ENCODE measurements at regions of chr3 and their contacts with region 1.

Region 1: DNA sequence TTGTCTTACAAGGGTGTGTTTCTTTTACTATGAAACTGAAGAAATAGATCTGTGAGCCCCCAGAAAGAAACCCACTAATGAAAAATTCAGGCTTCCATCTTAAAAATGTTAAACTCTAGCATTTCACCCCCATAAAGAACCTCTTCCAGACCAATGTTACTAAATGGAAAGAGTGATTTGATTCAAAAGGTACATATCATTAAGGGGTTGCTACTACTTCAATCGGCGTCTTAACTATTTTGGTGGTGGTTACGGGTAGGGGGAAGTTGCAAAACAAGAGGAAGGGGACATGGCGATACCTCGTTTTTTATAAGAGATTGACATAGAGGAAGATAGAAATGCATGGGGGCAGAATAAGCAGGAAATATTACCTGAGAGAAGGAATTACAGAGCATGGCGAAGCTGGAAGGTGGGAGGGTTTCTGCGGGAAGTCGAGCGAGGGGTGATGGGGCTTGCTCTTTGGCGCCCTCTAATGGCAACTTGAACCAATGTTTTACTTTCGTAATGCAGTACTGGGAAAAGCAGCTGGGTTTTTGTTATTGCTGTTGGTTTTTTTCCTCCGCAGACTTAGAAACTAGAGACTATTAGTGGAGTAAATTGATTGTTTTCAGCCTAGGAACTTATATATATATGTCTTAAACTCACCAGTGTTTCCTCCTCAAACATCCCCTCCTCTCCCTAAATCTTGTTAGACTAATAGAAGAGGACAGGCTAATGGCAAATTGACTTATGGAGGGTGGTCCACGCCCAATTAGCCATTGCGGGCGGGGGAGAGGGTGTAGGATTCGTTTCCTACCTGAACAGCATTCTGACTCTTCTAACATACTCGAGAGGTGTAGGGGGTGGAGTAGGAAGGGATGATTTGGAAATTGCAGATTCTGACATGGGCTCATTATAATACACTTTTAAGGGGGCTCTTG is 11.3 kb upstream of the SOX2 start:
- DNase-seq: peak; percentile 60
- ATAC-seq: peak; percentile 50
- H3K4me3 Mint-ChIP-seq: no peak overlapping the region
- H3K27ac Mint-ChIP-seq: no peak overlapping the region
- H3K4me1 Mint-ChIP-seq: peaks cover 23% of the 10 kb centered on the region
- H3K27me3 Mint-ChIP-seq: peaks cover 86% of the 10 kb centered on the region
- CTCF ChIP-seq: peak; percentile 75

Region 2: GRCh38 chr3:181210275-181210674 is 490.2 kb before region 1 on chr3:
- CTCF ChIA-PET with region 1: interaction called, 3 read pairs
- POLR2A ChIA-PET with region 1: no interaction called
- intact Hi-C with region 1: loop called (anchors 5 kb)
- DNase-seq: no peak
- ATAC-seq: no peak
- H3K4me3 Mint-ChIP-seq: no peak overlapping the region
- H3K27ac Mint-ChIP-seq: no peak overlapping the region
- H3K4me1 Mint-ChIP-seq: no peaks in the 10 kb centered on the region
- H3K27me3 Mint-ChIP-seq: peaks cover 6% of the 10 kb centered on the region
- CTCF ChIP-seq: peak; percentile 31

Region 3: GRCh38 chr3:181689546-181689945 is 10.9 kb before region 1 on chr3:
- CTCF ChIA-PET with region 1: interaction called, 10 read pairs
- POLR2A ChIA-PET with region 1: no interaction called
- intact Hi-C with region 1: no loop called
- DNase-seq: no peak
- ATAC-seq: no peak
- H3K4me3 Mint-ChIP-seq: no peak overlapping the region
- H3K27ac Mint-ChIP-seq: no peak overlapping the region
- H3K4me1 Mint-ChIP-seq: no peaks in the 10 kb centered on the region
- H3K27me3 Mint-ChIP-seq: peaks cover 11% of the 10 kb centered on the region
- CTCF ChIP-seq: no peak

Region 4: DNA sequence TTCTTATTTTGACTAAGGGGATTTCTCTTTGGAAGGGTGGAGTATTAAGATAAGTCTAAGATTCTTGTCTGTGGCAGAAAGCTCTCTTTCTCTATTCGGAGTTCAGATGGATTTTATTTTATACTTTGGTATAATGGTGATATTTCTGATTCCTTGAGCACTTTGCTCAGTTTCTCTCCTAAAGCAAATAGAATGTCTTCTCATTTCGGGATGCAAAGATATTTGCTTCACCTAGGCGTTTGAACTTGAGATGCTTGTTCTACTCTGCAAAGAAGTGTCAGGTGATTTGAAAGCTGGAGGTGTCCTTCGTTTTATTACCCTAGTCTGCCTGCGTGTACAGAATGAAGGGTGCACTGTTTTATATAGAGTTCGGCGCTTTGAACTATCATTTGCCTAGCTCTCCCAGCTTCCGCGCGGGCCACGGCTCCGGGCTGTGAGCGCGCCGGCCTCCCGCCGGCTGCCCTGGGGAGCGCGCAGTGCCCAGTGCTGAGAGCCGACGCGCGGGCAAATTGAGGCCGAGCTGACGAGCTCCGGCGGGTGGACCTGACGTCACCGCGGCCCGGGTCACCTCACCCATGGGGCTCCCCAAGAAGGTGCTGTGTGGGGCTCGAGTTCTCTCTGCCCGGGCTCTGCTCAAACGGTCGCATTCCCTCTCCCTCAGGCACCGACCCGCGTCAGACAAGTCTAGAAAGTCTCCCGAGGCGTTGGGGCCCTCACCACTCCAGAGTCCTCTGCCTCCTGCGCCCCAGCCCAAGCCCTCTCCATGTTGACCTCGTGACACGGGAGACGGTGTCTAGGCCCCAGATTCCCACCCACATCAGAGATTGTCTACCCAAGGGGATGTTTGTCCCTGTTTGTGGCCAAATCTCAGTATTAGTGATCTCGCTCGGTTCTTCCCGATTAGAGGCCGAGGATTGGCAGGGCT is 18.8 kb after region 1 on chr3:
- CTCF ChIA-PET with region 1: interaction called, 13 read pairs
- POLR2A ChIA-PET with region 1: no interaction called
- intact Hi-C with region 1: no loop called
- DNase-seq: no peak
- ATAC-seq: no peak
- H3K4me3 Mint-ChIP-seq: no peak overlapping the region
- H3K27ac Mint-ChIP-seq: no peak overlapping the region
- H3K4me1 Mint-ChIP-seq: peaks cover 3% of the 10 kb centered on the region
- H3K27me3 Mint-ChIP-seq: peaks cover 90% of the 10 kb centered on the region
- CTCF ChIP-seq: no peak

Region 5: GRCh38 chr3:181726351-181727330 is 26.2 kb after region 1 on chr3:
- CTCF ChIA-PET with region 1: interaction called, 10 read pairs
- POLR2A ChIA-PET with region 1: interaction called, 4 read pairs
- intact Hi-C with region 1: no loop called
- DNase-seq: no peak
- ATAC-seq: no peak
- H3K4me3 Mint-ChIP-seq: peak overlapping the region; percentile 47
- H3K27ac Mint-ChIP-seq: no peak overlapping the region
- H3K4me1 Mint-ChIP-seq: peaks cover 21% of the 10 kb centered on the region
- H3K27me3 Mint-ChIP-seq: peaks cover 92% of the 10 kb centered on the region
- CTCF ChIP-seq: no peak

Measured in activated CD8-positive, alpha-beta T cell treated with anti-CD3 and anti-CD28 coated beads for 36 hours (primary cell).